GM12878 (cell line): ENCODE measurements at regions of chr18 and their contacts with region 1.

Region 1: GRCh38 chr18:62131301-62131909 is 55.5 kb downstream of the PIGN start:
- DNase-seq: peak; percentile 7
- ATAC-seq: peak; percentile 87
- H3K4me3 ChIP-seq: no peak overlapping the region
- H3K27ac ChIP-seq: no peak overlapping the region
- H3K4me1 ChIP-seq: no peaks in the 10 kb centered on the region
- H3K27me3 ChIP-seq: no peaks in the 10 kb centered on the region
- CTCF ChIP-seq: peak; percentile 83 to 92 (median 86)
- EP300 ChIP-seq: no peak
- POLR2A ChIP-seq: no peak
- RAD21 ChIP-seq: peak; percentile 99

Region 2: GRCh38 chr18:61093965-61094364 is 1037.4 kb before region 1 on chr18:
- CTCF ChIA-PET with region 1: no interaction called
- POLR2A ChIA-PET with region 1: no interaction called
- RAD21 ChIA-PET with region 1: no interaction called
- SMC1A ChIA-PET with region 1: no interaction called
- in situ Hi-C with region 1: no loop called
- intact Hi-C with region 1: loop called (anchors 5 kb)
- DNase-seq: no peak
- ATAC-seq: no peak
- H3K4me3 ChIP-seq: no peak overlapping the region
- H3K27ac ChIP-seq: no peak overlapping the region
- H3K4me1 ChIP-seq: no peaks in the 10 kb centered on the region
- H3K27me3 ChIP-seq: no peaks in the 10 kb centered on the region; a peak in 1 of 4 replicates
- CTCF ChIP-seq: no peak
- EP300 ChIP-seq: no peak
- POLR2A ChIP-seq: no peak
- RAD21 ChIP-seq: no peak

Region 3: DNA sequence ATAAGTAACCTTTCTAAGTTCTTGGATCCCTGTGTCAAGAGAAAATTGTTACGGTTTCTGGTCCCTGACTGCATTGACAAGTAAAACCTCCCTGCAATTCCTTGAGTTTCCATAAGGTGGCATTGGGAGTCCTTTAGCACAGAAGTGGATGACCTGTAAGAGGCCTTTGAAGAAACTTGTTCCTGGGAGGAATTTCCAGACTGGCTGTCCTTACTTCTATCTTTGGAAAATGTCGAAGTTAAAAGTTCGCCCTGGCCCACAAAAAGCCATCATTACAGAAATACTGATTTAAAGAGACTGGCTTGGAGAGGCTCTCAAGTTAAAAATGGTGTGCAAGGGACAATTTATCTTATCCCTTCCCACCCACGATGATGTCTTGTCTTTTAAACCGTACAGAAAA is 579.8 kb before region 1 on chr18:
- CTCF ChIA-PET with region 1: interaction called, 12 read pairs
- POLR2A ChIA-PET with region 1: no interaction called
- RAD21 ChIA-PET with region 1: no interaction called
- SMC1A ChIA-PET with region 1: interaction called, 4 read pairs
- in situ Hi-C with region 1: no loop called
- intact Hi-C with region 1: loop called (anchors 1 kb)
- DNase-seq: peak; percentile 7
- ATAC-seq: peak; percentile 80
- H3K4me3 ChIP-seq: no peak overlapping the region
- H3K27ac ChIP-seq: no peak overlapping the region
- H3K4me1 ChIP-seq: no peaks in the 10 kb centered on the region
- H3K27me3 ChIP-seq: no peaks in the 10 kb centered on the region
- CTCF ChIP-seq: peak; percentile 58 to 75 (median 67)
- EP300 ChIP-seq: no peak
- POLR2A ChIP-seq: no peak
- RAD21 ChIP-seq: peak; percentile 57

Region 4: GRCh38 chr18:61635901-61636528 is 495.4 kb before region 1 on chr18:
- CTCF ChIA-PET with region 1: interaction called, 71 read pairs
- POLR2A ChIA-PET with region 1: no interaction called
- RAD21 ChIA-PET with region 1: interaction called, 23 read pairs
- SMC1A ChIA-PET with region 1: interaction called, 59 read pairs
- in situ Hi-C with region 1: loop called (anchors 5 kb)
- intact Hi-C with region 1: loop called (anchors 1 kb)
- DNase-seq: no peak
- ATAC-seq: peak; percentile 83
- H3K4me3 ChIP-seq: no peak overlapping the region
- H3K27ac ChIP-seq: no peak overlapping the region
- H3K4me1 ChIP-seq: no peaks in the 10 kb centered on the region
- H3K27me3 ChIP-seq: no peaks in the 10 kb centered on the region
- CTCF ChIP-seq: peak; percentile 66 to 74 (median 70)
- EP300 ChIP-seq: no peak
- POLR2A ChIP-seq: no peak
- RAD21 ChIP-seq: peak; percentile 76

Region 5: GRCh38 chr18:61901323-61901986 is 229.9 kb before region 1 on chr18:
- CTCF ChIA-PET with region 1: interaction called, 29 read pairs
- POLR2A ChIA-PET with region 1: no interaction called
- RAD21 ChIA-PET with region 1: interaction called, 5 read pairs
- SMC1A ChIA-PET with region 1: interaction called, 4 read pairs
- in situ Hi-C with region 1: loop called (anchors 10 kb)
- intact Hi-C with region 1: loop called (anchors 2 kb)
- DNase-seq: peak; percentile 7
- ATAC-seq: peak; percentile 99
- H3K4me3 ChIP-seq: no peak overlapping the region
- H3K27ac ChIP-seq: no peak overlapping the region
- H3K4me1 ChIP-seq: no peaks in the 10 kb centered on the region
- H3K27me3 ChIP-seq: no peaks in the 10 kb centered on the region; a peak in 2 of 4 replicates
- CTCF ChIP-seq: peak; percentile 87 to 99 (median 95)
- EP300 ChIP-seq: no peak
- POLR2A ChIP-seq: no peak
- RAD21 ChIP-seq: peak; percentile 72

Region 6: DNA sequence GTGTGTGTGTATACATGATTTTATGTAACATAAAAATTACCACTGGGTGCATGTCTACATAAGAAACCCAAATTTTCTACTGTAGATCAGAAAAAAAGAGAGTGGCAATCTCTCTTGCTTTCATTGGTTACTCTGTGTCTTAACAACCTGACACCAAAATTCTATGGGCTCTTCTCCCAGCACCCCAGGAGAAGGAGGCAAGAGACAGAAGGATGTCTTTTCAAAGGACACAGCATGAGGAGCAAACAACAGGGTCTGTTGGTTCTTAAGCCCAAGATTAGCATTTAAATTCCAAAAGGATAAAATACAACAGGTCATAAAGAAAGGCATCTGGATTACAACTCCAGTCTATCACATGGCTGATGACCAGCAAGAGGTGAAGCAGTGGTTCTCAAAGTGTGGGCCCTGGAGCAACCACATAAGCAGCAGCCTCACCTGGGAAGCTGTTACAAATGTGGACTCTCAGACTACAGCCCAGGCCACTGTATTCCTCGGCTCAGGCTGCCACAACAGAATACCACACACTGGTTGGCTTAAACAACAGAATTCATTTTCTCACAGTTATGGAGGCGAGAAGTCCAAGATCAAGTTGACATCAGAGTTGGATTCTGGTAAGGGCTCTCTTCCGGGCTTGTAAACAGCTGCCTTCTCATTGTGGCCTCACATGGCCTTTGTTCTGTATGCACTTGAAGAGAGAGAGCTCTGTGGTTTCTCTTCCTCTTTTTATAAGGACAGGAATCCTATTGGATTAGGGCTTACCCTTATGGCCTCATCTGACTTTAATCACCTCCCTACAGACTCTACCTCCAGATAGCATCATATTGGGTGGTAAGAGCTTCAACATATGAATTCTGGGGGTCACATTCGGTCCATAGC is 158.8 kb before region 1 on chr18:
- CTCF ChIA-PET with region 1: no interaction called
- POLR2A ChIA-PET with region 1: no interaction called
- RAD21 ChIA-PET with region 1: no interaction called
- SMC1A ChIA-PET with region 1: no interaction called
- in situ Hi-C with region 1: no loop called
- intact Hi-C with region 1: no loop called
- DNase-seq: no peak
- ATAC-seq: peak; percentile 92
- H3K4me3 ChIP-seq: no peak overlapping the region
- H3K27ac ChIP-seq: no peak overlapping the region
- H3K4me1 ChIP-seq: 0 out of 2 replicates have a peak, but pooled peaks cover 3% of the 10 kb centered on the region
- H3K27me3 ChIP-seq: no peaks in the 10 kb centered on the region
- CTCF ChIP-seq: no peak
- EP300 ChIP-seq: no peak
- POLR2A ChIP-seq: no peak
- RAD21 ChIP-seq: no peak

Region 7: GRCh38 chr18:62249478-62250097 is 118.2 kb after region 1 on chr18:
- CTCF ChIA-PET with region 1: interaction called, 12 read pairs
- POLR2A ChIA-PET with region 1: no interaction called
- RAD21 ChIA-PET with region 1: interaction called, 3 read pairs
- SMC1A ChIA-PET with region 1: interaction called, 5 read pairs
- in situ Hi-C with region 1: no loop called
- intact Hi-C with region 1: no loop called
- DNase-seq: peak; percentile 35
- ATAC-seq: peak; percentile 86
- H3K4me3 ChIP-seq: no peak overlapping the region
- H3K27ac ChIP-seq: no peak overlapping the region
- H3K4me1 ChIP-seq: no peaks in the 10 kb centered on the region
- H3K27me3 ChIP-seq: no peaks in the 10 kb centered on the region
- CTCF ChIP-seq: peak; percentile 65 to 74 (median 72)
- EP300 ChIP-seq: no peak
- POLR2A ChIP-seq: no peak
- RAD21 ChIP-seq: peak; percentile 88